ENCODE measurements at regions of chr3 and their contacts with region 1.

Region 1: GRCh38 chr3:66138336-66139313 is 82.2 kb upstream of the SLC25A26 start:
- DNase-seq: no peak
- H3K4me3 ChIP-seq: no peak overlapping the region
- H3K27ac ChIP-seq: no peak overlapping the region
- H3K4me1 ChIP-seq: peaks cover 0 to 9% (median 5%) of the 10 kb centered on the region in 4 donors
- H3K27me3 ChIP-seq: no peaks in the 10 kb centered on the region
- CTCF ChIP-seq: peak; percentile 74 to 84 (median 77)
- EP300 ChIP-seq: no peak
- POLR2A ChIP-seq: no peak

Region 2: DNA sequence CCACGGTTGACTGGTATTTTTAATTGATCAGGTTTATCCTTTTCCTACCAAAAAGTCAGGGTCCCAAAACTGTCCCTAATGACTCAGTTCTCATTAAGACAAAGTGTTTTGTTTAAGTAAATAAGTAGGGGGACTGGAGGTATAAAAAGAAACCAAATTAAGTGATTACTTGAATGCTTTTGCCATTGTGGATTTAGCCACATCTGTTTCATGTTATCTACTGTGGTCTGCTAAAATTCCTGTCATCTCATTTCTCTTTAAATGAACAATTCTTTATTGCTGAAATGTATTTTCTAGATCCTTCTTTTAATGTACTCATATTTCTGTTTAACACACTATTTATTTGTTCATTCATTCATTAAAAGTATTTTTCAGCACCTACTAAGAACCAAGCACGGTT is 825.0 kb before region 1 on chr3:
- intact Hi-C with region 1: no loop called
- DNase-seq: no peak
- H3K4me3 ChIP-seq: no peak overlapping the region
- H3K27ac ChIP-seq: no peak overlapping the region
- H3K4me1 ChIP-seq: no peaks in the 10 kb centered on the region
- H3K27me3 ChIP-seq: no peaks in the 10 kb centered on the region
- CTCF ChIP-seq: no peak
- EP300 ChIP-seq: no peak
- POLR2A ChIP-seq: no peak

Region 3: DNA sequence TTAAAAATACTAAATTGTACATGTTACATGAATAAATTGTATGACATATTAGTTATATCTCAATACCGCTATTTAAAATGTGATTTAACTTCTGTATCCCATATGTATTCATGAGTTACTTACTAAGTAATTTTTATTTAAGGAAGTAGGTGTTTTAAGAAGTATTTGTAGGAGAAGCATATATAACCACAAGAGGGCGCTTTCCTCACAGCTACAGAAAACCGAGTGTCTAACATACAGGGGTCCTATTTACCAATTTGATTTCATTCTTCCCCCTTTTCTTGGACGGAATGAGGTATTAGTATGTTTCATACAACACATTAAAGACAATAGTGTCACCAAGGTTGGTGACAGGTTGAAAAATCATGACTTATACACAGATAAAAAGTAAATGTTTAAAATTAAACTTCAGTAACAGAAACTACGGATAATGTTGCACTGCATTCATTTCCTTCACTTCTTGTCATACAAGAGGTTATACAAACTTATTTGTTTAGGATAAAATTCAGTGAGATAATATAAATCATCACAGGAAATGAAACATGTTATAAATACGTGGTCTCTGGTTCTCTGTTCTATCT is 353.5 kb before region 1 on chr3:
- intact Hi-C with region 1: loop called (anchors 1 kb)
- DNase-seq: no peak
- H3K4me3 ChIP-seq: no peak overlapping the region
- H3K27ac ChIP-seq: no peak overlapping the region
- H3K4me1 ChIP-seq: peaks cover 17 to 21% (median 18%) of the 10 kb centered on the region in 4 donors
- H3K27me3 ChIP-seq: no peaks in the 10 kb centered on the region
- CTCF ChIP-seq: peak; percentile 53 to 78 (median 75)
- EP300 ChIP-seq: no peak
- POLR2A ChIP-seq: no peak

Region 4: DNA sequence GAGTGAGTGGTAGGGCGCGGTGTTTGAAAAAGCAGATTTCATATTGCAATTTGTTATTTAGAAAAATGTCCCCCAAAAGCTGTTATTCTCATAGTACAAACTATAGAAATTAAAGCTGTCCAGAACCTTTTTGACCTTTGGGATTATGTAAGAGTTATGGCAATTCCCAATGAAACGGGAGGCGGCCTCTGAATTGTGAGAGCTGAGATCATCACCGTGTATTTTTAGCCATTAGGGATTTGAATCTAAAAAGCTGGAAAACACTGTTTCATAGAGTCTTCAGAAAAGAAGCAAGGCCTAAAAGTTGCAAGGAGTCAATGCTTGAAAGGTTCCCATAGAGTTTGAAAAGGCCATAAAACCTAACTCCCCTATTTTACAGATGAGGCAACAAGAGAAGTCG is 43.6 kb after region 1 on chr3:
- intact Hi-C with region 1: no loop called
- DNase-seq: no peak
- H3K4me3 ChIP-seq: no peak overlapping the region
- H3K27ac ChIP-seq: no peak overlapping the region
- H3K4me1 ChIP-seq: peaks cover 0 to 10% (median 0%) of the 10 kb centered on the region in 4 donors
- H3K27me3 ChIP-seq: no peaks in the 10 kb centered on the region
- CTCF ChIP-seq: no peak
- EP300 ChIP-seq: no peak
- POLR2A ChIP-seq: no peak

Region 5: GRCh38 chr3:66625505-66626216 is 487.0 kb after region 1 on chr3:
- intact Hi-C with region 1: no loop called
- DNase-seq: no peak
- H3K4me3 ChIP-seq: no peak overlapping the region
- H3K27ac ChIP-seq: no peak overlapping the region
- H3K4me1 ChIP-seq: peaks cover 0 to 11% (median 8%) of the 10 kb centered on the region in 4 donors
- H3K27me3 ChIP-seq: no peaks in the 10 kb centered on the region
- CTCF ChIP-seq: no peak
- EP300 ChIP-seq: no peak
- POLR2A ChIP-seq: no peak